CD4-positive, alpha-beta T cell (primary cell): ENCODE measurements at regions of chr7 and their contacts with region 1.

Region 1: GRCh38 chr7:55469271-55469681 is 103.0 kb downstream of the VOPP1 start:
- DNase-seq: peak in 13 of 14 experiments; percentile 25 to 79 (median 46)
- ATAC-seq: peak; percentile 89
- H3K4me3 ChIP-seq: no peak overlapping the region
- H3K4me3 Mint-ChIP-seq: peak overlapping the region; percentile 82
- H3K27ac ChIP-seq: peak overlapping the region; percentile 66 to 79
- H3K27ac Mint-ChIP-seq: peak overlapping the region; percentile 89
- H3K4me1 ChIP-seq: peaks cover 88% of the 10 kb centered on the region
- H3K4me1 Mint-ChIP-seq: peaks cover 76% of the 10 kb centered on the region
- H3K27me3 ChIP-seq: no peaks in the 10 kb centered on the region
- H3K27me3 Mint-ChIP-seq: no peaks in the 10 kb centered on the region
- CTCF ChIP-seq: no peak

Region 2: DNA sequence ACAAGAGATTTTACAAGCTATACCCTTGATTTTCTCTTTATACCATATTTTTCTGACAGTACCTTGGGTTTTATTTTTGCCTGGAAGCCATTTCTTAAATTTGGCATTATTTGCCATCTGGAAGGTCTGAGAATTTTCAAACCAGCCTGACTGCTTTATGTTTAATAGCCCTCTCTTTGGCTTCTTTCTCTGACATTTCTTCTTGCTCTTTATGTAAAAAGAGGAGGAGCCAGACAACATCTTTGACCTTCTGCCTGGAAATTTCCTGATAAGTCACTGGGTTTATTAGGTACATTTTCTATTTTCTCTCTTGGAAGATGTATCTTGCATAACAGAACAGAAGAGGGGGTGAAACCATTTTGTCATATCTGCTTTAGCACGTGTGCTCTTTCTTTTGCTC is 24.5 kb before region 1 on chr7:
- CTCF ChIA-PET with region 1: no interaction called
- POLR2A ChIA-PET with region 1: interaction called, 17 read pairs
- intact Hi-C with region 1: no loop called
- DNase-seq: no peak
- ATAC-seq: no peak
- H3K4me3 ChIP-seq: no peak overlapping the region
- H3K4me3 Mint-ChIP-seq: no peak overlapping the region
- H3K27ac ChIP-seq: no peak overlapping the region
- H3K27ac Mint-ChIP-seq: no peak overlapping the region
- H3K4me1 ChIP-seq: peaks cover 14% of the 10 kb centered on the region
- H3K4me1 Mint-ChIP-seq: peaks cover 34% of the 10 kb centered on the region
- H3K27me3 ChIP-seq: no peaks in the 10 kb centered on the region
- H3K27me3 Mint-ChIP-seq: no peaks in the 10 kb centered on the region
- CTCF ChIP-seq: no peak

Region 3: DNA sequence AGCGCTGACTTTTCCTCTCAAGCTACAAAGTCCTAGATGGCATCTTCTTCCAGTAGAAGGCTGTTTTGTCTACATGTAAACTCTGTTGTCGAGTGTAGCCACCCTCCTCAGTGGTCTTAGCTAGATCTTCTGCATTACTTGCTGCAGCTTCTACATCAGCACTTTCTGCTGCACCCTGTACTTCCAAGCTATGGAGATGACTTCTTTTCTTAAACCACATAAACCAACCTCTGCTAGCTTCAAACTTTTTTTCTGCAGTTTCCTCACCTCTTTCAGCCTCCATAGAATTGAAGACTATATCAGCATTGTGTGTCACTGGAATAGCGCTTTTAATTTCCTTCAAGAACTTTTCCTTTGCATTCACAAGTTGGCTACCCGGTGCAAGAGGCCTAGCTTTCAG is 16.3 kb before region 1 on chr7:
- CTCF ChIA-PET with region 1: no interaction called
- POLR2A ChIA-PET with region 1: interaction called, 16 read pairs
- intact Hi-C with region 1: no loop called
- DNase-seq: no peak
- ATAC-seq: no peak
- H3K4me3 ChIP-seq: no peak overlapping the region
- H3K4me3 Mint-ChIP-seq: peak overlapping the region; percentile 17
- H3K27ac ChIP-seq: no peak overlapping the region
- H3K27ac Mint-ChIP-seq: peak overlapping the region; percentile 72
- H3K4me1 ChIP-seq: peaks cover 6% of the 10 kb centered on the region
- H3K4me1 Mint-ChIP-seq: peaks cover 59% of the 10 kb centered on the region
- H3K27me3 ChIP-seq: no peaks in the 10 kb centered on the region
- H3K27me3 Mint-ChIP-seq: no peaks in the 10 kb centered on the region
- CTCF ChIP-seq: no peak